Activated CD4-positive, alpha-beta memory T cell treated with anti-CD3 and anti-CD28 coated beads, Interleukin-2, amount 10 ng/mL, durations not matched to agents 7 days and 5 days (primary cell): ENCODE measurements at regions of chr3 and their contacts with region 1.

Region 1: GRCh38 chr3:187745201-187746058 is at the start of gene BCL6:
- DNase-seq: peak; percentile 91
- H3K4me3 Mint-ChIP-seq: peak within 1 kb of the TSS; percentile 89
- H3K27ac Mint-ChIP-seq: peak within 1 kb of the TSS; percentile 99
- H3K4me1 Mint-ChIP-seq: peaks cover 56% of the 10 kb centered on the region
- H3K27me3 Mint-ChIP-seq: no peaks in the 10 kb centered on the region
- total RNA-seq, gene BCL6: 30.4 to 33.4 TPM

Region 2: DNA sequence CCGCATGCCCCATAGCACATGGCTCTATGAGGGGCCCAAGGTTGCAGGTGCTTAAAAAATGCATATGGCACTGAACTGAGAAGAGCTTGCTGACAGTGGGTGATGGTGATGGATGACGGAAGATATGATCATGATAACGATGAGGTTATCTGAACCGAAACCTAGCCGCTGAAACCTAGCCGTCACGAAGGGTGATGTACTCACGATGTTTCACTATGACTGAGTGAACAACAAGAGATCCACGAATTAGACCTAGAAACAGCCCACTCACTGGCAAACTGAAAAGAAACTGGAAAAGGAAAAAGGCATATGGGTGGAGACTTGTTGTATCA is 57.5 kb after region 1 on chr3:
- CTCF ChIA-PET with region 1: interaction called, 79 read pairs
- POLR2A ChIA-PET with region 1: interaction called, 251 read pairs
- DNase-seq: peak; percentile 88
- H3K4me3 Mint-ChIP-seq: peak overlapping the region; percentile 61
- H3K27ac Mint-ChIP-seq: peak overlapping the region; percentile 85
- H3K4me1 Mint-ChIP-seq: peaks cover 94% of the 10 kb centered on the region
- H3K27me3 Mint-ChIP-seq: no peaks in the 10 kb centered on the region

Region 3: DNA sequence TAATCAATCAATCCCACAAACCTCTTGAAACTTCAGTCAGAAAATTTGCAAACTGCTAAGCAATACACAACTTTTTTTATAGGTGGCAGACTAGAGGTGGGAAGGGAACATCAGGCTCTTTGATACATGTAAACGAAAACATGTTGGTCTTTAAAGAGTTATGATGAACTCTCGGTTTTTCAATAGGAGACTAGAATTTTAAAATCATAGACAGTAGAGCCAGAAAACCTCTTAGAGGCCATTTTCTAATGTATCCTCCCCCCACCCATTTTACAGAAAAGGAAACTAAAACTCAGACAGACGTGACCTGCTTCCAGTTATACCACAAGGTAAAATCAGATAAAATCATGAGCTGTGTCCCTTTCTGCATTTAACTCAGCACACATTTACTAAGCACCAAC is 229.4 kb after region 1 on chr3:
- CTCF ChIA-PET with region 1: interaction called, 42 read pairs
- POLR2A ChIA-PET with region 1: interaction called, 56 read pairs
- DNase-seq: no peak
- H3K4me3 Mint-ChIP-seq: peak overlapping the region; percentile 37
- H3K27ac Mint-ChIP-seq: peak overlapping the region; percentile 87
- H3K4me1 Mint-ChIP-seq: peaks cover 64% of the 10 kb centered on the region
- H3K27me3 Mint-ChIP-seq: no peaks in the 10 kb centered on the region

Region 4: GRCh38 chr3:188051801-188052168 is 306.4 kb after region 1 on chr3:
- CTCF ChIA-PET with region 1: interaction called, 12 read pairs
- POLR2A ChIA-PET with region 1: interaction called, 15 read pairs
- DNase-seq: no peak
- H3K4me3 Mint-ChIP-seq: no peak overlapping the region
- H3K27ac Mint-ChIP-seq: no peak overlapping the region
- H3K4me1 Mint-ChIP-seq: peaks cover 20% of the 10 kb centered on the region
- H3K27me3 Mint-ChIP-seq: no peaks in the 10 kb centered on the region

Region 5: GRCh38 chr3:188164248-188164687 is 418.8 kb after region 1 on chr3:
- CTCF ChIA-PET with region 1: interaction called, 37 read pairs
- POLR2A ChIA-PET with region 1: interaction called, 12 read pairs
- DNase-seq: no peak
- H3K4me3 Mint-ChIP-seq: no peak overlapping the region
- H3K27ac Mint-ChIP-seq: peak overlapping the region; percentile 70
- H3K4me1 Mint-ChIP-seq: peaks cover 63% of the 10 kb centered on the region
- H3K27me3 Mint-ChIP-seq: no peaks in the 10 kb centered on the region